Calu3 (cell line): ENCODE measurements at regions of chr22 and their contacts with region 1.

Region 1: GRCh38 chr22:45268958-45269844 is 15.5 kb upstream of the UPK3A start:
- DNase-seq: peak; percentile 88
- H3K4me3 Mint-ChIP-seq: peak overlapping the region; percentile 82
- H3K27ac Mint-ChIP-seq: peak overlapping the region; percentile 77
- H3K4me1 Mint-ChIP-seq: peaks cover 23% of the 10 kb centered on the region
- H3K27me3 Mint-ChIP-seq: no peaks in the 10 kb centered on the region
- CTCF ChIP-seq: peak; percentile 93

Region 2: DNA sequence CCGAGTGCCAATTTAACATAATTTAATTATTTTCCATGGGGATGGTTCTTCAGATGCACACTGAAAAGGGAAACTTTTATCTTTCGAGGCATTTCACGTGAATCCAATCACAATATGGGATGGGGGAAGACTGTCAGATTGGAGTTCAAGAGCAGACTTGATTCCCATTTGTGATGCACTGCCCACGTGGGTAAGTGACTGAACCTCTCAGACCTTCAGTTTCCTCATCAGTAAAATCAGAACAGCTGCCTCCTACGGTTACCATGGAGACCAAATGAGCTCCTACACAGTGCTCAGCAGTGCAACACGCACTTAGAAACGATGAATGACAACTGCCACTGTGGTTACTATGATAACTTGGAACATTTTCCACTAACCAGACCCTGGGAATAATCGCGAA is 50.2 kb before region 1 on chr22:
- CTCF ChIA-PET with region 1: no interaction called
- intact Hi-C with region 1: no loop called
- DNase-seq: no peak
- H3K4me3 Mint-ChIP-seq: no peak overlapping the region
- H3K27ac Mint-ChIP-seq: no peak overlapping the region
- H3K4me1 Mint-ChIP-seq: peaks cover 8% of the 10 kb centered on the region
- H3K27me3 Mint-ChIP-seq: no peaks in the 10 kb centered on the region
- CTCF ChIP-seq: no peak

Region 3: DNA sequence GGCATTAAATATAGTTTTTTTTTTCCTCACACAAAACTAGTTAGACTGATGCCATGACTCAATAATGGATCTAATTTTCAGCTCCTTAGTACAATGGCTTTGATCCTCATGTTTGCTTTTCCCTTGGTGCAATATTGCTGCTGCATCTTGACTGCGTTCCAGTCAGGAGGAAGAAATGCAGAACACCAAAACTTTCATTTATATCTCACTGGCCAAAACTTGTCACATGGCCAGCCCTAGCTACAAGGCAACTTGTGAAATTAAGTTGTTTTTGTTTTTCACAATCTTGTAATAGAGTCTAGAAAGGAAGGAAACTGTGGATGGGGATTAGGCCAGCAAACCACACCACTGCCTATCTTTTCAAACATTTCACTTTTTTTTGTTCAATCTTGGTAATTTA is 107.5 kb after region 1 on chr22:
- CTCF ChIA-PET with region 1: no interaction called
- intact Hi-C with region 1: no loop called
- DNase-seq: no peak
- H3K4me3 Mint-ChIP-seq: no peak overlapping the region
- H3K27ac Mint-ChIP-seq: no peak overlapping the region
- H3K4me1 Mint-ChIP-seq: no peaks in the 10 kb centered on the region
- H3K27me3 Mint-ChIP-seq: no peaks in the 10 kb centered on the region
- CTCF ChIP-seq: no peak

Region 4: GRCh38 chr22:45435544-45436139 is 166.4 kb after region 1 on chr22:
- CTCF ChIA-PET with region 1: no interaction called
- intact Hi-C with region 1: loop called (anchors 1 kb)
- DNase-seq: peak; percentile 87
- H3K4me3 Mint-ChIP-seq: no peak overlapping the region
- H3K27ac Mint-ChIP-seq: no peak overlapping the region
- H3K4me1 Mint-ChIP-seq: peaks cover 13% of the 10 kb centered on the region
- H3K27me3 Mint-ChIP-seq: no peaks in the 10 kb centered on the region
- CTCF ChIP-seq: peak; percentile 93